B cell (primary cell): ENCODE measurements at regions of chr9 and their contacts with region 1.

Region 1: GRCh38 chr9:135961277-135961705 is at the start of gene UBAC1:
- DNase-seq: peak; percentile 97
- ATAC-seq: peak; percentile 90
- H3K4me3 ChIP-seq: peak within 1 kb of the TSS; percentile 38 to 88 (median 78)
- H3K4me3 Mint-ChIP-seq: peak within 1 kb of the TSS; percentile 88
- H3K27ac ChIP-seq: peak within 1 kb of the TSS; percentile 1 to 74
- H3K27ac Mint-ChIP-seq: peak within 1 kb of the TSS; percentile 83
- H3K4me1 ChIP-seq: peaks cover 11 to 18% of the 10 kb centered on the region in 2 donors
- H3K4me1 Mint-ChIP-seq: peaks cover 24% of the 10 kb centered on the region
- H3K27me3 ChIP-seq: peaks cover 0 to 22% (median 0%) of the 10 kb centered on the region in 4 experiments
- H3K27me3 Mint-ChIP-seq: peaks cover 18% of the 10 kb centered on the region
- CTCF ChIP-seq: no peak
- total RNA-seq, gene UBAC1: 30.8 and 32.4 TPM in 2 replicates

Region 2: DNA sequence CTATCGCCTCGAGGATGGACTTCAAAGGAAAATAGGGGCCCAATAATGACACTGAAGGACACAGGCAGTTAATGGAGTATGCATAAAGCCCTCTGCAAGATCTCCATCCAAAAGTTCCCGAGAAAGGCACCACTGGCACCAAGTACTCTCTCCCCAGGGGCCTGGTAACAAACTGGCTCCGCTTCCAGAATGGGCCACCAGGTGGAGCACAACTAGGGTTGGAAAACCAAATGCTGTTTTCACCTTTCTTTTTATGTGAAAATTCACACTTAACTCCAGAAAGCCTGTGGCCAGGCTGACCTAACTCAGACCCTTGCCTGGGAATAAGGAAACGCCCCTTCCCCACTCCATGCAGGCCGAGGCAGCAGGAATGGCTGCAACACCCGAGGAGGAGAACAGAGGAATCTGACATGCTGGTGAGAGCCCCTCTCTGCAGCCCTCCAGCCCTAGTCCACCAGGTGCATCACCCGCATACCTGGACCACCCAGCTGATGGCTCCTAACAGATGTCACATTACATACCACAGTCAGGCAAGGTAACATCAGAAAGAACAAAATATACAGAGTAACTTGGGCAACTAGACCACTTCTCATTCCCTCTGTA is 96.7 kb before region 1 on chr9:
- CTCF ChIA-PET with region 1: interaction called, 7 read pairs
- POLR2A ChIA-PET with region 1: no interaction called
- intact Hi-C with region 1: loop called (anchors 1 kb)
- DNase-seq: peak; percentile 66
- ATAC-seq: peak; percentile 56
- H3K4me3 ChIP-seq: no peak overlapping the region
- H3K4me3 Mint-ChIP-seq: no peak overlapping the region
- H3K27ac ChIP-seq: no peak overlapping the region
- H3K27ac Mint-ChIP-seq: no peak overlapping the region
- H3K4me1 ChIP-seq: peaks cover 0 to 6% of the 10 kb centered on the region in 2 donors
- H3K4me1 Mint-ChIP-seq: peaks cover 5% of the 10 kb centered on the region
- H3K27me3 ChIP-seq: no peaks in the 10 kb centered on the region
- H3K27me3 Mint-ChIP-seq: no peaks in the 10 kb centered on the region
- CTCF ChIP-seq: peak; percentile 96

Region 3: DNA sequence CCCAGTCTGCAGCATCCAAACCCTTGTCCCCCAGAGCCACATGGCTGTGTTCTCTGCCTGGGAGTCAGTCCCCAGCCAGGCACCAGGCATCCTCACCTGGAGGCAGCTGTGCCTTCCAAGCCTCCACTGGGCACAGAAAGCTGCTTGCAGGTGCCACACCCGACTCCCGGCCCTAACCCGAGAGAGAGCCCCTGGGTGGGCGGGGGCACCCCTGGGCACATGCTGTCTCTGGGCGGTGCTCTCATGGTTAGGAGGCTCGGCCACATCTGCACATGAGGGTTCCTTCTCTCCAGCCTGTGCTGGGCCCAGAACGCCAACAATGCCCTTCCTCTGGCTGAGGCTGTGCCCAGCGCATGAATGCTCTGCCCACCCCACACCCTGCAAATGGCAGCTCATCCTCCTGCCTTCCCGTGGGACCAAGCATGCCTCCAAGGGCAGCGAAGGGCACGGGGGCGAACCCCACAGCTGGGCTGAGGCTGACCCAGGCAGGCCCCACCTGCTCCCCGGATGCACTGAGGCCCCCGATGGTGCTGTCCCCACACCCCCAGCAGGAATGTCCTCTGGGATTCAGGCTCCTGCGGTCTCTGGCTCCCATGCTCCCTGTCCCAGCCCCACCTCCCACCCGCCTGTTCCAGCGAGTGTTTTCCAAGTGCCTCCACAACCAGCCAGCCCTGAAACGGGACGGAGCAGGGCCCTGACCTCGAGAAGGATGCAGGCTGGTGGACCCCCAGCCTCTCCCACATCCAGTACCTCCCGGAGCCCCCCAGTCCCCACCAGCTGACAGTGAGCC is 31.4 kb before region 1 on chr9:
- CTCF ChIA-PET with region 1: no interaction called
- POLR2A ChIA-PET with region 1: no interaction called
- intact Hi-C with region 1: no loop called
- DNase-seq: no peak
- ATAC-seq: no peak
- H3K4me3 ChIP-seq: no peak overlapping the region
- H3K4me3 Mint-ChIP-seq: no peak overlapping the region
- H3K27ac ChIP-seq: no peak overlapping the region
- H3K27ac Mint-ChIP-seq: no peak overlapping the region
- H3K4me1 ChIP-seq: no peaks in the 10 kb centered on the region
- H3K4me1 Mint-ChIP-seq: no peaks in the 10 kb centered on the region
- H3K27me3 ChIP-seq: no peaks in the 10 kb centered on the region
- H3K27me3 Mint-ChIP-seq: no peaks in the 10 kb centered on the region
- CTCF ChIP-seq: no peak

Region 4: GRCh38 chr9:135990468-135991429 is 29.5 kb after region 1 on chr9:
- CTCF ChIA-PET with region 1: no interaction called
- POLR2A ChIA-PET with region 1: no interaction called
- intact Hi-C with region 1: loop called (anchors 1 kb)
- DNase-seq: peak; percentile 75
- ATAC-seq: peak; percentile 74
- H3K4me3 ChIP-seq: peak overlapping the region in 3 of 5 experiments; percentile 19 to 41 (median 25)
- H3K4me3 Mint-ChIP-seq: peak overlapping the region; percentile 64
- H3K27ac ChIP-seq: no peak overlapping the region
- H3K27ac Mint-ChIP-seq: peak overlapping the region; percentile 32
- H3K4me1 ChIP-seq: peaks cover 29 to 30% of the 10 kb centered on the region in 2 donors
- H3K4me1 Mint-ChIP-seq: peaks cover 28% of the 10 kb centered on the region
- H3K27me3 ChIP-seq: peaks cover 0 to 31% (median 2%) of the 10 kb centered on the region in 4 experiments
- H3K27me3 Mint-ChIP-seq: no peaks in the 10 kb centered on the region
- CTCF ChIP-seq: no peak

Region 5: GRCh38 chr9:136245219-136246150 is 284.2 kb after region 1 on chr9 and contains the start of gene QSOX2:
- CTCF ChIA-PET with region 1: no interaction called
- POLR2A ChIA-PET with region 1: no interaction called
- intact Hi-C with region 1: loop called (anchors 10 kb)
- DNase-seq: peak; percentile 91
- ATAC-seq: peak; percentile 71
- H3K4me3 ChIP-seq: peak within 1 kb of the TSS; percentile 66 to 97 (median 90)
- H3K4me3 Mint-ChIP-seq: peak within 1 kb of the TSS; percentile 94
- H3K27ac ChIP-seq: peak within 1 kb of the TSS; percentile 70 to 83
- H3K27ac Mint-ChIP-seq: peak within 1 kb of the TSS; percentile 90
- H3K4me1 ChIP-seq: peaks cover 46 to 51% of the 10 kb centered on the region in 2 donors
- H3K4me1 Mint-ChIP-seq: peaks cover 50% of the 10 kb centered on the region
- H3K27me3 ChIP-seq: no peaks in the 10 kb centered on the region
- H3K27me3 Mint-ChIP-seq: no peaks in the 10 kb centered on the region
- CTCF ChIP-seq: no peak
- total RNA-seq, gene QSOX2: 139 and 141 TPM in 2 replicates

Region 6: DNA sequence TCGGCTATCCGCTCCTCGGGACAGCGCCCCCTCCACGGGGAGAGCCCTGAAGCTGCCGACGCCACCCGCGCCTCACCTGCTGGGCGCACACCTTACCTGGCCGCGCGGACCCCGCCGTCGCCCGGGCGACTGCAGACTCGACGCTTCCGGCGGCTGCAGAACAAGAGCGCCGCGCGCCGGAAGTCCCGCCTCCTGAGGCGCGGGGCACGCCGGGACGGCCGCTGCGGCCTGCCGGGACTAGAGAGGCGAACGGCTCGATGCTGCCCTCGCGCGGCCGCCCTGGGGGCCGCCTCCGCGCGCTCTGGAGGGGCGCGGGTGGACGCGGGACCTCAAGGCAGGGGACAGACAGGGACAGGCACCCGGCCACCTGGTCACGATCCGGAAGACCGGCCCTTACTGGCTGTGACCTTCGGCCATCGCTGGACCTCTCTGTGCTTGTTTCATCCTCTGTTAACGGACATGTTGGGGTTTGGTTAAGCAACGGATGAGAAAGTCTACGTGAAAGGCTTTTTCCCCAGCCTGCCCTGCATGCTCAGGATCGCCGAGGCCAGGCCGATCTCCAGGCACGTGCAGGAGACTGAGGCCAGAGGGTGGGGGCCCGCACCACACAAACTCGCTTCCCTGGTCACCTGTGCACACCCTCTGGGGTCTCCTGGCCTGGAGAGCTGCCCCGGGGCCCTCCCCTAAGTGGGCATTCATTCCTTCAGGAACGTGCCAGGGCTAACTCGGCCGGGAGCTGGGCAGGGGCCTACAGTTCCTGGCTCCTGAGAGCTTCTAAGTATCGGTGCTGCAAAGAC is 438.9 kb after region 1 on chr9 and contains the start of gene SNAPC4:
- CTCF ChIA-PET with region 1: no interaction called
- POLR2A ChIA-PET with region 1: no interaction called
- intact Hi-C with region 1: loop called (anchors 2 kb)
- DNase-seq: peak; percentile 92
- ATAC-seq: peak; percentile 91
- H3K4me3 ChIP-seq: peak within 1 kb of the TSS; percentile 30 to 83 (median 76)
- H3K4me3 Mint-ChIP-seq: peak within 1 kb of the TSS; percentile 89
- H3K27ac ChIP-seq: peak within 1 kb of the TSS in 1 of 2 donors; percentile 54
- H3K27ac Mint-ChIP-seq: peak within 1 kb of the TSS; percentile 70
- H3K4me1 ChIP-seq: peaks cover 37 to 41% of the 10 kb centered on the region in 2 donors
- H3K4me1 Mint-ChIP-seq: peaks cover 42% of the 10 kb centered on the region
- H3K27me3 ChIP-seq: no peaks in the 10 kb centered on the region
- H3K27me3 Mint-ChIP-seq: no peaks in the 10 kb centered on the region
- CTCF ChIP-seq: peak; percentile 94
- total RNA-seq, gene SNAPC4: 15.4 and 15.6 TPM in 2 replicates